Panc1 (cell line): ENCODE measurements at regions of chr3 and their contacts with region 1.

Region 1: DNA sequence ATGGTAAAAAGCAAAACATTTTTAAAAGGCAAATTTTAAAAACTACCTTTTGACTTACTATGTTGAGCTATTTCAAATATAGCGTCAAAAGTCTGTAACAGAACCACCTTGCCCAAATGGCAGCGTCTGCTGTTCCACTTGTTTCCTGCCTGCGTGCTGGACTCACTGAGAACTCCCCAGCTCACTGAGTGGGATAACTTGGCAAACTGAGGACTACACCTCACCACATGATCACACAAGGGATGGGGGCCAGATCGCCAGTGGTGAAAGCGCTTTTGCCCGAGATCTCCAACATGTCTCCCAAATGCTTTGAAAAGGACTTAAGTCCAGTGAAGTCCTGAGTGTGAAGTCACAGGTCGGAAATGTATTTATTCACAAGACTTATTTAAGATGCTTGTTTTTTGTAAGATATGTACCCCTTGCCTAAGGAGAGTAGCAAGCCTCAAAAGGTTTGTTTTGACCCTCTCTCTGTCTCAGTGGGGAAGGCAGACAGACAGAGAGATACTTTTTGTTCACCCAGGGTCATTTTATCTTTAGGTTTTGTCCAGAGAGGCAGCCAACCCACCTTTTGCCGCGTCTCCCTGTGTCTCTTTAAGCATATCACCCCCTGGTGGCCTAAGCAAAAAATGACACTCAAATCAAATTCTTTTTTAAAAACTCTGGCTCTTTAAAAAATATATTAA is 192.6 kb downstream of the PDZRN3 start:
- DNase-seq: peak; percentile 17
- ATAC-seq: no peak
- H3K4me3 ChIP-seq: no peak overlapping the region
- H3K27ac ChIP-seq: no peak overlapping the region
- H3K4me1 ChIP-seq: no peaks in the 10 kb centered on the region
- H3K27me3 ChIP-seq: no peaks in the 10 kb centered on the region
- CTCF ChIP-seq: peak; percentile 75

Region 2: DNA sequence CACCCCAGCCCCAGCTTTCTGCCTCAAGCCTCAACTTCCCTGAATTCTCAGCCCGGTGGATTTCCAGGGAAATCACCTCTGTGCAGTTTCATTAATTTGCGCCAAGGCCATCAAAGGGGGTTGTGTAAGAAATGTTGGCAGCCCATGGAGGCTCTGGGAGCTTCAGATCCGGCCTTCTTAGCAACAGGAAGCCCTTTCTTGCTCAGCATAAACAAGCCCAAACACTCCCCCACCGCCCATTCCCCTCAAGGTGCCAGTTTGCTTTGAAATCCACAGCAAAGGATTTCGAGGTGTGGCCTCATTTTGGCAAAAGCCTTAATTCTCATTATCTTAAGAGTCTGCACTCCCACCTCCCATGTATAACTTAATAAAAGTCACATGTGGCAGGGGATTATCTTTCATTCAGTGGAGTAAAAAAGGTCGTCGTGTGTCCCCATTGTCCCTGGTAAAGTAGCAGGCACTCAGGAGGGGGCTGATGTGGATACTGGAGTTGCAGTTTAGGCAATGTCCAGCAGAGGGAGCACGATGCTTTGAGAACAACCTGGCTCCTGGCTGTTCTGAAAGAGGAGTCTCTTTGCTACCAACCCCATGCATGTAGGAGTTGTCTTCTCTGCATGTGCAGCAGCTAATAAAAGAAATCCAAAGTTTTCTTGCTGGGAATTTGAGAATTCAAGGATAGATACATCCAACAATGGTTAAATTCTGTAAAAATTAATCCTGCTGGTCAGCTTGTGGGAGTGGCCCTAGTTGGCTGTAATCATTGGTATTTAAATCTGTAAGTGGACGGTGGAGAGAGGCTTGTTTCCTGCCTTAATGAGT is 331.2 kb before region 1 on chr3:
- CTCF ChIA-PET with region 1: no interaction called
- POLR2A ChIA-PET with region 1: no interaction called
- in situ Hi-C with region 1: no loop called
- intact Hi-C with region 1: loop called (anchors 1 kb)
- DNase-seq: peak; percentile 48
- ATAC-seq: peak; percentile 92
- H3K4me3 ChIP-seq: no peak overlapping the region
- H3K27ac ChIP-seq: no peak overlapping the region
- H3K4me1 ChIP-seq: no peaks in the 10 kb centered on the region
- H3K27me3 ChIP-seq: no peaks in the 10 kb centered on the region
- CTCF ChIP-seq: peak; percentile 83